CD4-positive, alpha-beta memory T cell (primary cell): ENCODE measurements at regions of chr3 and their contacts with region 1.

Region 1: GRCh38 chr3:47513125-47513929 is at the start of gene ELP6:
- DNase-seq: peak; percentile 98 to 99 (median 99)
- H3K4me3 ChIP-seq: peak within 1 kb of the TSS; percentile 73 to 96
- H3K4me3 Mint-ChIP-seq: peak within 1 kb of the TSS; percentile 95 to 99 (median 97)
- H3K27ac ChIP-seq: peak within 1 kb of the TSS; percentile 88
- H3K27ac Mint-ChIP-seq: peak within 1 kb of the TSS; percentile 97 to 99 (median 98)
- H3K4me1 ChIP-seq: peaks cover 13% of the 10 kb centered on the region
- H3K4me1 Mint-ChIP-seq: peaks cover 10 to 33% (median 17%) of the 10 kb centered on the region in 4 donors
- H3K27me3 ChIP-seq: no peaks in the 10 kb centered on the region
- H3K27me3 Mint-ChIP-seq: no peaks in the 10 kb centered on the region
- total RNA-seq, gene ELP6: 24.8 to 28.6 TPM

Region 2: GRCh38 chr3:47380601-47381316 is 132.6 kb before region 1 on chr3 and contains the start of gene PTPN23:
- CTCF ChIA-PET with region 1: no interaction called
- POLR2A ChIA-PET with region 1: interaction called, 5 read pairs
- intact Hi-C with region 1: loop called (anchors 1 kb)
- DNase-seq: peak; percentile 98 to 99 (median 98)
- H3K4me3 ChIP-seq: peak within 1 kb of the TSS; percentile 88 to 97
- H3K4me3 Mint-ChIP-seq: peak within 1 kb of the TSS; percentile 99
- H3K27ac ChIP-seq: peak within 1 kb of the TSS; percentile 90
- H3K27ac Mint-ChIP-seq: peak within 1 kb of the TSS; percentile 95 to 100 (median 100)
- H3K4me1 ChIP-seq: peaks cover 43% of the 10 kb centered on the region
- H3K4me1 Mint-ChIP-seq: peaks cover 26 to 59% (median 40%) of the 10 kb centered on the region in 4 donors
- H3K27me3 ChIP-seq: no peaks in the 10 kb centered on the region
- H3K27me3 Mint-ChIP-seq: no peaks in the 10 kb centered on the region
- total RNA-seq, gene PTPN23: 50.0 to 53.9 TPM

Region 3: DNA sequence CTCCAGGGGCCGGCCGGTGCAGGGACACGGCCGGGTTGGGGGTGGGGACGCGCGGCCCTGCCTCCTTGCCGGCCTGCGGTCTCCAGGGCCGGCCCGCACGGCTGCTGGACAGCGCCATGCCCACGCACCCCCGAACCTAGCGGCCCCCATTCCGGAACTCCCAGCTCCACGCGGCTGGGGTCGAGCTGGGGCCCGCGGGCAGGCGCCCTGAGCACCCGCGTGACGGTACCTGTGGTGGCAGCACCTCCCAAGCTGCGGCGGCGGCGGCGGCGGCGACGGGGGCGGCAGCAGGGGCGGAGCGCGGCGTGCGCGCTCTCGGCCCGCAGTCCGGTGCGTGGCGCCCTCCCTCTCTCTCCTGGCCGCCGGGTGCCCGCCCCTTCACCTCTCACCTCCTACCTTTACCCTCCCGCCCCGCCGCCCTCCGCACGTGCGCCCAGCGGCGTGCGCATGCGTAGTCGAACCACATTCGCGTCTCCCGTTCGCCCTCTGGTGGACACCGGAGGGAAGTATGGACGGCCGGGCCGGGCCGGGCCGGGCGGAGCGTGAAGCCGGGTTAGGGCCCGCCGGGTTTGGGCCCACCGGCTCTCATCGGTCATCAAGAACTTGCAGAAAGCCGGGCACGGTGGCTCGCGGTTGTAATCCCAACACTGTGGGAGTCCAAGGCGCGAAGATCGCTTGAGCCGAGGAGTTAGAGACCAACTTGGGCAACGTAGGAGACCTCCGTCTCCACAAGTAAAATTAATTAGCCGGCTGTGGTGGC is 37.6 kb before region 1 on chr3 and contains the start of gene SCAP:
- CTCF ChIA-PET with region 1: interaction called, 4 read pairs
- POLR2A ChIA-PET with region 1: interaction called, 12 read pairs
- intact Hi-C with region 1: loop called (anchors 1 kb)
- DNase-seq: peak; percentile 94 to 95 (median 95)
- H3K4me3 ChIP-seq: peak within 1 kb of the TSS; percentile 43 to 61
- H3K4me3 Mint-ChIP-seq: peak within 1 kb of the TSS; percentile 84 to 97 (median 92)
- H3K27ac ChIP-seq: peak within 1 kb of the TSS; percentile 72
- H3K27ac Mint-ChIP-seq: peak within 1 kb of the TSS; percentile 84 to 94 (median 93)
- H3K4me1 ChIP-seq: peaks cover 26% of the 10 kb centered on the region
- H3K4me1 Mint-ChIP-seq: peaks cover 25 to 48% (median 36%) of the 10 kb centered on the region in 4 donors
- H3K27me3 ChIP-seq: no peaks in the 10 kb centered on the region
- H3K27me3 Mint-ChIP-seq: no peaks in the 10 kb centered on the region
- total RNA-seq, gene SCAP: 85.7 to 88.1 TPM

Region 4: GRCh38 chr3:47791193-47791855 is 278.0 kb after region 1 on chr3:
- CTCF ChIA-PET with region 1: interaction called, 8 read pairs
- POLR2A ChIA-PET with region 1: interaction called, 5 read pairs
- intact Hi-C with region 1: loop called (anchors 2 kb)
- DNase-seq: no peak
- H3K4me3 ChIP-seq: no peak overlapping the region
- H3K4me3 Mint-ChIP-seq: peak overlapping the region in 1 of 8 donors; percentile 46
- H3K27ac ChIP-seq: no peak overlapping the region
- H3K27ac Mint-ChIP-seq: no peak overlapping the region
- H3K4me1 ChIP-seq: no peaks in the 10 kb centered on the region
- H3K4me1 Mint-ChIP-seq: peaks cover 0 to 1% (median 0%) of the 10 kb centered on the region in 4 donors
- H3K27me3 ChIP-seq: no peaks in the 10 kb centered on the region
- H3K27me3 Mint-ChIP-seq: no peaks in the 10 kb centered on the region